ENCODE measurements at regions of chr15 and their contacts with region 1.

Region 1: DNA sequence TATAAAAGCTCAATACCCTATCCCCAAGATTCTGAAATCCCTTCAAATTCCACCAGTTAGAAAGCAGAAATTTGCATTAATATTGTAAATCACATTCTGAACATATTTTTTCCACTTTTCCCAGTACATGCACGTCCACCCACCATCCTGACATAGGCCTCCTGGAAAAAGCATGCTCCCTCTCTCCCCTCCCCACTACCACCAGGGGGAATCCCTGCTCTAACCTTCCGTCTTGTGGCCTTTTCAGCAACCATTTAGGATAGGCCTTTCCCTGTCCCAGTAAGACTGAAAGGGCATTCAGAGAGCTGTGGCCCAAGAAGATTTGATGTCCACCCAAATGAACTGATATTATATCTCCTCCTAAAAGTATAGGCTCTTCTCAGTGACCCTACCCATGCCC is 182.1 kb downstream of the ARRDC4 start:
- DNase-seq: no peak
- H3K4me3 ChIP-seq: no peak overlapping the region
- H3K27ac ChIP-seq: no peak overlapping the region
- H3K4me1 ChIP-seq: peaks cover 0 to 21% (median 11%) of the 10 kb centered on the region in 4 experiments
- H3K27me3 ChIP-seq: no peaks in the 10 kb centered on the region

Region 2: DNA sequence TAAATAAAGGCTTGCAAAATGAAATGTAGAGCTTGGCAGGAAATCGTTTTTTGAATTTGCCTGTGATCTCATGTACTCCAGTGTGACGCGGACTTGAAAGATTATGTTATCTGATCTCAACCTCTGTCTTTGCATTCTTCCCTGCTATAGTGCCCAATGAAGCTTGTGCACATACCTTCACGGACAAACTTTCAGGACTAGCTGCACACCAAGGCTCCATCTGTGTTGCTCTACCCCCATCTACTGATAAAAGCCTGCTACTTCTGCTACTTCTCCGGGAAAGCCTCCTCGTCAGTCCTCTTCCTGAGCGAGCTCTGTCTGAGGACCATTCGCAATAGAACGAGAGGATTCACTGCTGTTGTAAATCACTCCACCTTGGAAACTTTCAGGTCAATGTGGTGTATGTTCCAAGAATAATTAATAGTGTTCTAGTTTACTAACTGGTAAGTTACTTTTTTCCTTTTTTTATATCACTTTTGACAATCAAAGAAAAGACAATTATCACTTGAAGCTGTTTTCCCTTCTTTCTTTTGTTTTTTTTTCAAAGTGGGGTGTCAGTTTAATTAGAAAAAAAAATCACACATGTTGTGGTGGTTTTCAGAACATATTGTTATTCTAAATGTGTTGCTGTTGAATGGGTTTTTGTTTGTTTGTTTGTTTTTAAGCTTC is 35.5 kb after region 1 on chr15:
- CTCF ChIA-PET with region 1: interaction called, 20 read pairs
- POLR2A ChIA-PET with region 1: no interaction called
- DNase-seq: peak; percentile 80 to 83 (median 81)
- H3K4me3 ChIP-seq: no peak overlapping the region
- H3K27ac ChIP-seq: no peak overlapping the region
- H3K4me1 ChIP-seq: peaks cover 0 to 8% (median 0%) of the 10 kb centered on the region in 4 experiments
- H3K27me3 ChIP-seq: peaks cover 0 to 22% (median 8%) of the 10 kb centered on the region in 5 experiments